GM10248 (cell line): ENCODE measurements at regions of chr5 and their contacts with region 1.

Region 1: GRCh38 chr5:75049456-75050351 is 2.7 kb downstream of the GCNT4 start:
- DNase-seq: peak; percentile 43
- CTCF ChIP-seq: peak; percentile 67

Region 2: GRCh38 chr5:75059912-75060545 is 10.3 kb after region 1 on chr5:
- CTCF ChIA-PET with region 1: interaction called, 14 read pairs
- POLR2A ChIA-PET with region 1: no interaction called
- DNase-seq: no peak
- CTCF ChIP-seq: no peak

Region 3: DNA sequence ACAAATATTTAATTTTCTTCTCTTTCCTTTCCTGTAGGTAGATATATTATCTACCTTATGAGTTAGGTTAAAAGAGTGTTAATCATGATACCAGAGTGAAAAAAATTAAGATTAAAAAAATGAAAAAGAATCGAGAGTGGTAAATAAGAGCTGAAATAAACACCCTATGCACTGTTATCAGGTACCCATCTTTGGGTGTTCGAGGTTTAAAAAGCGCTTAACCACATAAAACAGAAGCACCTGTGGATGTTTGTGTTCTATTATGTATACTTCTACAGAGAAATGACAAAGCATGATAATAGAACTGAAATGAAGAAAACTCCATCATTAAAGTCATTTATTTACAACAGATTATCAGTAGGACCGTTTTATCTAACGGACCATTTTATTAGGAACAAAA is 28.3 kb after region 1 on chr5:
- CTCF ChIA-PET with region 1: interaction called, 10 read pairs
- POLR2A ChIA-PET with region 1: no interaction called
- DNase-seq: no peak
- CTCF ChIP-seq: no peak